H1 (cell line): ENCODE measurements at regions of chr2 and their contacts with region 1.

Region 1: DNA sequence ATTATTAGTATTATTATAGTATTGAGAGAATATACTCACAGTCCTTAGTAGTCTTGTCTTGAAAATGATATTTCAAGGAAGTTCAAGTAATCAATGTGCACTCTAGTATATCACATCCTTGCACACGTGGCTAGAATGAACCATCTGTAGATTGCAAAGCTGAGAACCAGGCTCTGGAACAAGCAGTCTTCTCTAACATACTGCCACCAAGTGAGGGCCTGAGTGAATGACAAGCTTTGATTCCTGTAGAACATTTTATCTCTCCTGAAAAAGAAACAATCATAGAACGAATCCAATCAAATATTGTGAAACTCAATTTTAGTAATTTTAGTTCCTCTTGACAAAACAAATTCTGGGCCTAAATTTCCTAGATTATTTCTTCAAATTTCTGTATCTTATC is 55.3 kb upstream of the SULT1C3 start:
- DNase-seq: no peak
- H3K4me3 ChIP-seq: no peak overlapping the region
- H3K27ac ChIP-seq: no peak overlapping the region
- H3K4me1 ChIP-seq: no peaks in the 10 kb centered on the region
- H3K27me3 ChIP-seq: no peaks in the 10 kb centered on the region; a peak in 1 of 7 replicates
- CTCF ChIP-seq: peak in 2 of 3 experiments; percentile 40 to 49; a peak in 2 of 4 replicates
- EP300 ChIP-seq: no peak
- POLR2A ChIP-seq: no peak
- RAD21 ChIP-seq: peak; percentile 58 to 61

Region 2: GRCh38 chr2:107936433-107937359 is 247.7 kb before region 1 on chr2:
- CTCF ChIA-PET with region 1: interaction called, 219 read pairs
- POLR2A ChIA-PET with region 1: no interaction called
- DNase-seq: peak in 1 of 2 experiments; percentile 52
- H3K4me3 ChIP-seq: no peak overlapping the region
- H3K27ac ChIP-seq: no peak overlapping the region
- H3K4me1 ChIP-seq: no peaks in the 10 kb centered on the region
- H3K27me3 ChIP-seq: no peaks in the 10 kb centered on the region
- CTCF ChIP-seq: peak in 2 of 3 experiments; percentile 27 to 57; a peak in 2 of 4 replicates
- EP300 ChIP-seq: no peak
- POLR2A ChIP-seq: no peak
- RAD21 ChIP-seq: peak; percentile 83 to 84

Region 3: DNA sequence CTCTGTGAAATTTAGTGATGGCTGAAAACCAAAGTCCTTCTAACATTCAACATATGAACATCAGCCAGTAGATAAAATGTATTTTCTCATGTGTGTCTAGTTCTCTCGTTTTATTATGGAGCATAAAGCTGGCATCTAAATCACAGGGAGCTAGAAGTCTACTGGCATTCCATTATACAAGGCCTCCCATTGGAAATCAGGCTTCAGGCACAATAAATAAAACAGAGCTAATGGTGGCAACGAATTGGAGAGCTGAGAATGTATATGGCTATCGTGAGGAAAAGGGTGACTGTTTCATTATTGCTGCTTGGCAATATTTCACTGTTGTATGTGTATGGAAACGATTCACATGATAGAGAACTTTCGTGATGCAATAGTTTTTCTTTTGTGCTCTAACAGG is 135.7 kb before region 1 on chr2:
- CTCF ChIA-PET with region 1: no interaction called
- POLR2A ChIA-PET with region 1: no interaction called
- DNase-seq: no peak
- H3K4me3 ChIP-seq: no peak overlapping the region
- H3K27ac ChIP-seq: no peak overlapping the region
- H3K4me1 ChIP-seq: peaks cover 0 to 5% (median under 1%) of the 10 kb centered on the region in 4 experiments; a peak in 2 of 7 replicates
- H3K27me3 ChIP-seq: no peaks in the 10 kb centered on the region
- CTCF ChIP-seq: no peak
- EP300 ChIP-seq: no peak
- POLR2A ChIP-seq: no peak
- RAD21 ChIP-seq: no peak

Region 4: DNA sequence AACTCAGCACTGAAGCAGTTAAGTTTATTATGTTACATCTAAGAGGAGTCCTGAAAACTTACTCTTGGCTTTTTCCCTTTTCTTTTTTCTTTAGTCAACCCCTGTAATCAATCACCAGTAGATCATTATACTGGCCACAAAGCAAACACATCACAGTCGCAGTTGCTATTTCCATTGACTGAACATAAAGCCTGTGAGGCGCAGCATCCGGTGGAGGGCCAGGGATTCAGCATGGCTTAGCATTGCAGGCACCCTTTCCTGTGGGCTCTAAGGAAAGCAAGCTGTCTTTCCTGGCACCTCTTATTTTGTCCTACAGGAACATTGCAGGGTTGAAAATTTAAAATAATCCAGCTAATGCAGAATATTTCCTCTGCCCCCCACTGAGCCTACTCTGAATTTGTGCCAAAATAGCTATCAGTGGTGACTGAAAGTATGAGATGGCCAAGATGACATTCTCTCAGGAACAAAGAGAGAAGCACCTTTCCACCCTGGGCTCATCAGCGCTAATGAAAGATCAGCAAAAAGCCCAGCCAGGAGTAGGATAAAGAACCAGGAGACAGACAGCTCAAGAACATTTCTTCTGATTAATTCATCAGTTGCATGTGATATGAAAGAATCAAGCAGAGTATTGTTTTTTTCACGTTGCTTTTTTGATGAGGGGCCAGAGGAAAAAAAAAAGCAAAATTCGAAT is 29.9 kb before region 1 on chr2:
- CTCF ChIA-PET with region 1: interaction called, 19 read pairs
- POLR2A ChIA-PET with region 1: no interaction called
- DNase-seq: no peak
- H3K4me3 ChIP-seq: no peak overlapping the region
- H3K27ac ChIP-seq: no peak overlapping the region
- H3K4me1 ChIP-seq: no peaks in the 10 kb centered on the region
- H3K27me3 ChIP-seq: peaks cover 0 to 1% (median 0%) of the 10 kb centered on the region in 4 experiments; a peak in 1 of 7 replicates
- CTCF ChIP-seq: no peak
- EP300 ChIP-seq: no peak
- POLR2A ChIP-seq: no peak
- RAD21 ChIP-seq: no peak

Region 5: DNA sequence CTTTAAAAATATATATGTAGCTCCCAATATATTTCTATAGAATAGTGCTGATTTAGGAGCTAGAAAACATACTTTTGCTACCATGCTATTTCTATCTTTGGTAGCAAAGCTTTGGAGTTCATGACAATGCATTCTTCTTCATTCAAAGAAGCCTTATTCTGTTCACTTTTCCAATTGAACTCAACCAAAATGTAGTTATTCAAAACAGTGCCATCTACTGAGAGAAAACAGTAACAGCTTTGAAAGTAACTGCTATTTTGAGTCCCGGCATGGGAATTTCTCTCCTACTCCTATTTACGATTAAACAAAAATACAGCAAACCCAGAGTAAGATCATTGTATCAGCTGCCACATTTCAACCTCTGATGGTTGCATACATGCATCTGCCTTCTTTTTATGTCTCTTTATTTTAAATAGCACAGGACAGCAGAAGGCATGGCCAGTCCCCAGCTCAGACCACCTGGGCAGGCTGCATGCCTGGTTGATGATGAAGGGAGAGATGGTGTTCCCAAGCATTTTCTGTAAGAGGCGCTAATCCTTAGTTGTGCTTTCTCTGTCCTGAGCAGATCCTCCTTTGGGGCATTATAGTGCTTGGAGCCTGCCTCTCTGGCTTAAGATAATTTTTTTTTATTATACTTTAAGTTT is 14.3 kb before region 1 on chr2:
- CTCF ChIA-PET with region 1: interaction called, 17 read pairs
- POLR2A ChIA-PET with region 1: no interaction called
- DNase-seq: peak in 1 of 2 experiments; percentile 54
- H3K4me3 ChIP-seq: no peak overlapping the region
- H3K27ac ChIP-seq: no peak overlapping the region
- H3K4me1 ChIP-seq: no peaks in the 10 kb centered on the region
- H3K27me3 ChIP-seq: no peaks in the 10 kb centered on the region
- CTCF ChIP-seq: peak in 1 of 3 experiments; percentile 51; a peak in 2 of 4 replicates
- EP300 ChIP-seq: no peak
- POLR2A ChIP-seq: no peak
- RAD21 ChIP-seq: peak; percentile 37 to 45; a peak in 3 of 4 replicates

Region 6: DNA sequence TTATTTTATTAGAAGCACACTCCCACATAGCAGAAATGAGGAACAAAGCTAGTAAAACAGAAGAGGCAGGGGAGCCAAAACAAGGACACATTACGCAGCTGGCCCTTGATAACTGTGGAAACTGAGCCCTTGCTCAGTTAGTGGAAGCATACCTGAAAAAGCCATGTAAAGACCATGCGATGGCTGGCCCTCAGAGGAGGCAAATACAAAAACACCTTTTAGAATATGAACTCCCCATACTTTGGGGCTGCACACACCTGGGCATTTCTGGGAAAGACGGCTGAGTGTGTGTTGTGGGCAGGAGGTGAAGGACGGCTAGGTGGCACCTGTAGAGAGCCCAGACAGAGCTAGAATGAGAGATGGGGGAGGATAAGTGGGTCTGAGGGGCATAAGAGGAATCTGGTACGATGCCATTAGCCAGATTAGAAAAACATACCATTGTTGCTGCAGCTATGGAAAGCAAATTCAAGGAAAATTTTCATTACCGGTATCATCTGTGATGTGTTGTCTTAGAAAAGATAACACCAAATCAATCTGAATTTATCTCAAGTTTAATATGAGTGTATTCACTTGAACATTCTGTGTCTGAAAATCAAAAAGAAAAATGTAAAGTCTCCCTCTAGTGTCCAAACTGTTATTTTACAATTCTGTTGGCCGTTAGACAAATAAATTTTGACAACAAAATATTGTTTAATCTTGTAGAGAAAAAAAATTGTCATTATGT is 10.2 kb after region 1 on chr2:
- CTCF ChIA-PET with region 1: interaction called, 21 read pairs
- POLR2A ChIA-PET with region 1: no interaction called
- DNase-seq: no peak
- H3K4me3 ChIP-seq: no peak overlapping the region
- H3K27ac ChIP-seq: no peak overlapping the region
- H3K4me1 ChIP-seq: no peaks in the 10 kb centered on the region
- H3K27me3 ChIP-seq: no peaks in the 10 kb centered on the region
- CTCF ChIP-seq: peak in 1 of 3 experiments; percentile 19; a peak in 2 of 4 replicates
- EP300 ChIP-seq: no peak
- POLR2A ChIP-seq: no peak
- RAD21 ChIP-seq: peak in 1 of 2 experiments; percentile 6; a peak in 1 of 4 replicates

Region 7: DNA sequence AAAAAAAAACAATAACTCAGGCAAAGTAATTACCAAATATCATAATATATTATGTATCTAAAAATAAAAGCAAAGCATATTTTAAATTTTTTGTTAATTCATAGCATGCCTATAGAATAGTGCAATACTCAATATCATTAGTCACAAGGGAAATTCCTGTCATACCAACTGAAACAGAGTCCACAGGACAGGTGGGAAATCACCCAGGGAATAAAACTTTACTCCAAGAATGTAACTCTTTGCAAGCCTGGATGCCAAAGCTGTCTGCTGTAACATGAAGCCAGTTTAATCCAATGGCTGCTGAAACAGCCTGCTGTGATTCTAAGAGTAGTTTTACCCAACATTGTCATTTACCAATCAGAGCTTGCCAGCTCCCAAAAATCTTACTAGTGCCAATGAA is 15.3 kb after region 1 on chr2:
- CTCF ChIA-PET with region 1: interaction called, 21 read pairs
- POLR2A ChIA-PET with region 1: no interaction called
- DNase-seq: no peak
- H3K4me3 ChIP-seq: no peak overlapping the region
- H3K27ac ChIP-seq: no peak overlapping the region
- H3K4me1 ChIP-seq: no peaks in the 10 kb centered on the region
- H3K27me3 ChIP-seq: no peaks in the 10 kb centered on the region
- CTCF ChIP-seq: no peak
- EP300 ChIP-seq: no peak
- POLR2A ChIP-seq: no peak
- RAD21 ChIP-seq: no peak